ENCODE measurements at regions of chr17 and their contacts with region 1.

Region 1: GRCh38 chr17:8745586-8746500 is 1.2 kb upstream of the CCDC42 start:
- DNase-seq: peak; percentile 85
- ATAC-seq: peak; percentile 97

Region 2: GRCh38 chr17:8574687-8575086 is 171.2 kb before region 1 on chr17:
- intact Hi-C with region 1: loop called (anchors 2 kb)
- DNase-seq: peak; percentile 42
- ATAC-seq: peak; percentile 38

Region 3: DNA sequence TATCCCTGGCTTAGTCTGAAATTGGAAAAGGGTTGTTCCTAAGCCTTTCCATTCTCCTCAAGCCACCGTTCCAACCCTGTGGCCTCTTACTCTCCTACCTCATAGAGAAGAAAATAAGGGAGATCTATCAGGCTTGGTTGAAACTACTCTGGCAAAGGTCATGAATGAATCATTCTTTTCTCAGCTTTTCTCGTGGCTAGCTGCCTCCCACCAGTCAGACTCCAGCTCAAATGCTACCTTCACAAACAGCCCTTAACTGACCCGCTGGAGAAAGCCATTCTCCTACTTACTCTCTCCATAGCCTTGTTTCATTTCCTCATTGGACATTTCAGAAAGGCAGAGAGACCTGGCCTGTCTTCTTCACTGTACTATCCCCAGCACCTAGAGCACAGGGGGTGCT is 124.3 kb before region 1 on chr17:
- intact Hi-C with region 1: no loop called
- DNase-seq: no peak
- ATAC-seq: no peak